ENCODE measurements at regions of chr10 and their contacts with region 1.

Region 1: GRCh38 chr10:13440185-13441061 is 88.4 kb downstream of the BEND7 start:
- DNase-seq: peak; percentile 68
- H3K4me3 ChIP-seq: peak overlapping the region; percentile 41
- H3K27ac ChIP-seq: no peak overlapping the region
- H3K4me1 ChIP-seq: peaks cover 12% of the 10 kb centered on the region
- H3K27me3 ChIP-seq: peaks cover 8% of the 10 kb centered on the region
- CTCF ChIP-seq: peak; percentile 83

Region 2: GRCh38 chr10:13160934-13161856 is 279.2 kb before region 1 on chr10 and contains the start of gene MCM10:
- intact Hi-C with region 1: loop called (anchors 10 kb)
- DNase-seq: peak; percentile 99
- H3K4me3 ChIP-seq: peak within 1 kb of the TSS; percentile 59
- H3K27ac ChIP-seq: no peak within 1 kb of the TSS
- H3K4me1 ChIP-seq: peaks cover 6% of the 10 kb centered on the region
- H3K27me3 ChIP-seq: no peaks in the 10 kb centered on the region
- CTCF ChIP-seq: peak; percentile 83
- total RNA-seq, gene MCM10: 2.4 to 21.0 TPM

Region 3: DNA sequence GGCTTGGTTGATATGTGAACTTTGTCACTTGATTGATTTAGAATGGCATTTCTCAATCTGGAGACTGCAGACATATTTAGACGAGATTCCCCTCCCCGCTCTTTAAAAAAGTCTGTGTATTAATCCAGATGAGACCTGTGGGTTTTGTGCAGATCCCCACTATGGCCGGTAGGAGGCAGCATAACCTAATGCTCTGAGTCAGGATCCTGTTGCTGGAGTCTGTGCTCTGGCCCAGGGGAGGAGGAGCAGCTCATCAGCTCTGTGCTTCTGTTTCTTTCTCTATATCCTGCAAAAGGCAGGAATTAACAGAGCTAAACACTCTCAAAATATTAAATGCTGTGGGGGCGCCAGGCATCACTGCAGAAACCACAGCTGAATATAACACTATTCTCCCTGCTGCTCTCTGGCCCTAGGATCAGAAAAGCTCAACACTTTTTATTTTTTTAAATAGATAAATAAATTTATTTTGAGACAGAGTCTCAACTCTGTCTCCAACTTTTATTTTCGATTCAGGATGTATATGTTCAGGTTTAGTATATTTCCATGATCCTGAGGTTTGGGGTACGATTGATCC is 68.4 kb before region 1 on chr10:
- intact Hi-C with region 1: loop called (anchors 2 kb)
- DNase-seq: peak; percentile 79
- H3K4me3 ChIP-seq: no peak overlapping the region
- H3K27ac ChIP-seq: no peak overlapping the region
- H3K4me1 ChIP-seq: no peaks in the 10 kb centered on the region
- H3K27me3 ChIP-seq: no peaks in the 10 kb centered on the region
- CTCF ChIP-seq: peak; percentile 91